CD8-positive, alpha-beta T cell (primary cell): ENCODE measurements at regions of chr16 and their contacts with region 1.

Region 1: GRCh38 chr16:17369421-17370222 is 101.1 kb downstream of the XYLT1 start:
- DNase-seq: peak; percentile 60 to 94 (median 81)
- ATAC-seq: peak; percentile 82
- H3K4me3 ChIP-seq: peak overlapping the region; percentile 28 to 49
- H3K4me3 Mint-ChIP-seq: peak overlapping the region; percentile 82
- H3K27ac ChIP-seq: peak overlapping the region; percentile 78 to 84
- H3K27ac Mint-ChIP-seq: peak overlapping the region; percentile 97
- H3K4me1 ChIP-seq: peaks cover 73% of the 10 kb centered on the region
- H3K4me1 Mint-ChIP-seq: peaks cover 89% of the 10 kb centered on the region
- H3K27me3 ChIP-seq: no peaks in the 10 kb centered on the region
- H3K27me3 Mint-ChIP-seq: no peaks in the 10 kb centered on the region
- CTCF ChIP-seq: no peak

Region 2: DNA sequence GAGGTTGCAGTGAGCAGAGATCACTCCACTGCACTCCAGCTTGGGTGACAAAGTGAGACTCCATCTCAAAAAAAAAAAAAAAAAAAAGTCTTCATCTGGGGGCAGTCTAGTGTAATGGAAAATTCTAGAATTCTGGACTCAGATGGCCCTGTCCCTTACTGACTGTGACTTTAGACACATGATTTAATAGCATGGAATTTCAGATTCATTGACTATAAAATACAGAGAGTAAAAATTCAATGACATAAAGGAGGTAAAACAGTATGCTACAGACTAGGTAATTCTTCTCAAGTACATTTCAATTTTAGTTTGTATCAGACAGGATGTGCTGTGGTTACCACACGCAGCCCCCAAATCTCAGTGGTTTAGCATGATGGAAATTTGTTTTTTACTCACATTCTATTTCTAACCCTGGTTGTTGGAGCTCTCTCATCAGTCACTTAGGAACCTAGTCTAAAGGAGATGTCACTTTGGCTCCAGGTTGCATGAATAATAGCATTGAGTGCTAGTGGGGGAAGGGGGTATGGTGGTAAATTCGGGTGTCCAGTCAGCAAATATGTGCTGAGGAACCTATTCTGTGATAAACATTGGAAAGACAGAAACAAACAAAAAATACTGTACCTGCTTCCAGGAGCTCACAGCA is 342.9 kb before region 1 on chr16:
- CTCF ChIA-PET with region 1: no interaction called
- POLR2A ChIA-PET with region 1: no interaction called
- intact Hi-C with region 1: loop called in 1 of 2 experiments (anchors 5 kb)
- DNase-seq: peak in 6 of 9 experiments; percentile 30 to 74 (median 58)
- ATAC-seq: peak; percentile 84
- H3K4me3 ChIP-seq: no peak overlapping the region
- H3K4me3 Mint-ChIP-seq: peak overlapping the region; percentile 37
- H3K27ac ChIP-seq: no peak overlapping the region
- H3K27ac Mint-ChIP-seq: peak overlapping the region; percentile 85
- H3K4me1 ChIP-seq: peaks cover 32% of the 10 kb centered on the region
- H3K4me1 Mint-ChIP-seq: peaks cover 44% of the 10 kb centered on the region
- H3K27me3 ChIP-seq: no peaks in the 10 kb centered on the region
- H3K27me3 Mint-ChIP-seq: no peaks in the 10 kb centered on the region
- CTCF ChIP-seq: no peak

Region 3: DNA sequence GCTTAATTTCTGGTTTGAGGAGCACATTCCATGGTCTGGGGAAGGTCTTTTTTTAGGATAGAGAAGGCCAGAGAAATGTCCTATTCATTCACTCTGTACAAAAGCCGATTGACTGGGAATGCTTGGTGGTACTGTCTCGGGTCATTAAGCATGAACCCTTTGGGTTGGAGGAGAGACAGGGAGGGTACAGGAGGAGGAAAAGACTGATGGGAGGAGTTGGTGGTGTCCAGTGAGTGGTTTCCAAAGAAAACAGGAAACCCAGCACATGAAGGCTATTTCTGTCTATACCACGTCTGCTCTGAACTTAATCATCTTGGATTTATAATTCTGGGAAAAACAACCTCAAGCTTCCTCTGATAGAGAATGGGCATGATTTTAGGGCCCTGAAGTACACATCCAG is 10.8 kb before region 1 on chr16:
- CTCF ChIA-PET with region 1: interaction called, 12 read pairs
- POLR2A ChIA-PET with region 1: interaction called, 32 read pairs
- intact Hi-C with region 1: loop called in 1 of 2 experiments (anchors 1 kb)
- DNase-seq: no peak
- ATAC-seq: no peak
- H3K4me3 ChIP-seq: no peak overlapping the region
- H3K4me3 Mint-ChIP-seq: no peak overlapping the region
- H3K27ac ChIP-seq: peak overlapping the region in 1 of 2 experiments; percentile 59
- H3K27ac Mint-ChIP-seq: peak overlapping the region; percentile 97
- H3K4me1 ChIP-seq: peaks cover 58% of the 10 kb centered on the region
- H3K4me1 Mint-ChIP-seq: peaks cover 68% of the 10 kb centered on the region
- H3K27me3 ChIP-seq: no peaks in the 10 kb centered on the region
- H3K27me3 Mint-ChIP-seq: no peaks in the 10 kb centered on the region
- CTCF ChIP-seq: no peak

Region 4: DNA sequence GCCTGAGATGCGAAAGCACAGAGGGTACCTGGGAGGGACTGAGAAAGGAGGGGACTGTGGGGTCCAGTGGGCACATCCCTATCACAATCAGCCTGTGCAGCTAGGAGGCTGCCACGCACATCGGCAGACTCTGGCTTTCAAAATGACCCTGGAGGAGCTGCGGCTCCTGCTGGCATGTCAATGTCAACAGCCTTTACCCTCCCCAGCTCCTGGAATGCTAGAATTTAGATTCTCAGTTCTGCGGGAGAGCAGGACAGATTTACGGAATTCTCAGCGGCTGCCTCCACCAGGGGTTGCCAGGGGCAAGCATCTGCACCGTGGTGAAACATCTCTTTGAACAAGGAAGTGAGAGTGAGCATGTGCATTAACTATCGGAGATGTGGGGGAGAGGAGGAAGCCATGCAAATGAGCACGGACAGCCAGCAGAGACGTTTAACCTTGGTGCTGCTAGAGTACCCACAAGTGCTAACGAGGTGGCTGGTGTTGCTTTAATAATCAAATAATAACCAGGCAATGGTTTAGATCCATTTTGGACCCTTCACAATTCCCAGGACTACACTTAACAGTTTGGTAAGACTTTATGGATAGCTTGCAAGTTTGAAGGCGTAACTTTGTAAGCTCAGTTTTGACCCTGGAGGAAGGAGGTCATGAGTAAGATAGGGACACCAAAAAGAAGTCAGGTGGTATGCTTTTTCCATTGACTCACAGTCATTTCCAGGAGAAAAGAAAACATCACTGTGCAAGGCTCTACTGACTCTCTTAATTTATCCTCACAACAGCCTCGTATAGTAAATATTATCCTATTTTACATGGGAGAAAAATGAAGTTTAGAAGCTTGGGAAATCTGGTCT is 47.1 kb after region 1 on chr16:
- CTCF ChIA-PET with region 1: interaction called, 3 read pairs
- POLR2A ChIA-PET with region 1: interaction called, 10 read pairs
- intact Hi-C with region 1: loop called (anchors 1 to 5 kb)
- DNase-seq: peak; percentile 21 to 78 (median 55)
- ATAC-seq: peak; percentile 94
- H3K4me3 ChIP-seq: peak overlapping the region; percentile 41 to 49
- H3K4me3 Mint-ChIP-seq: peak overlapping the region; percentile 87
- H3K27ac ChIP-seq: peak overlapping the region; percentile 41 to 60
- H3K27ac Mint-ChIP-seq: peak overlapping the region; percentile 92
- H3K4me1 ChIP-seq: peaks cover 16% of the 10 kb centered on the region
- H3K4me1 Mint-ChIP-seq: peaks cover 42% of the 10 kb centered on the region
- H3K27me3 ChIP-seq: no peaks in the 10 kb centered on the region
- H3K27me3 Mint-ChIP-seq: no peaks in the 10 kb centered on the region
- CTCF ChIP-seq: peak; percentile 43

Region 5: DNA sequence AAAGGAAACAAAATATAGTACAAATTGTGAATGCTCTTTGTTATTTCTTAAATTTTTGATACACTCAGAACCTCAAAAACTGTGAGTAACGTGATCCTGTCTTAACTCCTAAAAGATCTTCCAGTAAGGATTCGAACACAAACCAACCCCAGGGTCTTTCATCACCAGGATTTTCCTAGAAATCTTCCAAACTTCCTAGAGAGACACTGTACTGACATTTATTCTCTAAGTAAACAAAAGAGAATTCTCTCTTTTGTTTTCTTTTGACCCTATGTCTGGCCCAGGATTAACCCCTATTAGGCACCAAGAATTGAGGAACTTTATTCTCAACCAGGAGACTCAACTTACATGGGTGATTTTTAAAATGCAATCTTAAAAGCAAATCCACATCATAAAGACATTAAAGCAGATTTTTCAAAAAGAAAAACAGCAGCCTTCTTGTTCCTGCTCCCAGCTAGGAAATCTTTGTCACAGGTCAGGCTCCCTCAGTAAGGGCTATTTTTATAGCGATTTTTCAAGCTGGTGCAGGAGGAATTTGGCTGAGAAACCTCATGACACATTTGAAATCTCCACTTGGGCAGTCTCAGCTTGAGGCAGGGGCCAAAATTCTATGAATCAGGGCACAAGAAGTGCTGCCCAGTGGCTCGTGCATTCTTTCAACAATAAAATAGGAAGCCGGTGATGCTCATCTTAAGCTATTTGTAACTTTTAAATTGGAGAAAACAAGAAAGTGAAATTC is 1562.8 kb after region 1 on chr16:
- CTCF ChIA-PET with region 1: no interaction called
- POLR2A ChIA-PET with region 1: no interaction called
- intact Hi-C with region 1: loop called in 1 of 2 experiments (anchors 10 kb)
- DNase-seq: no peak
- ATAC-seq: no peak
- H3K4me3 ChIP-seq: no peak overlapping the region
- H3K4me3 Mint-ChIP-seq: no peak overlapping the region
- H3K27ac ChIP-seq: no peak overlapping the region
- H3K27ac Mint-ChIP-seq: no peak overlapping the region
- H3K4me1 ChIP-seq: no peaks in the 10 kb centered on the region
- H3K4me1 Mint-ChIP-seq: peaks cover 4% of the 10 kb centered on the region
- H3K27me3 ChIP-seq: no peaks in the 10 kb centered on the region
- H3K27me3 Mint-ChIP-seq: peaks cover under 1% of the 10 kb centered on the region
- CTCF ChIP-seq: no peak